Psoas muscle (tissue), 8 donors: ENCODE measurements at regions of chr17 and their contacts with region 1.

Region 1: GRCh38 chr17:32142038-32142856 is at the start of gene RHOT1:
- DNase-seq: peak; percentile 81 to 88
- ATAC-seq: peak; percentile 79 to 84 (median 80)
- H3K4me3 ChIP-seq: peak within 1 kb of the TSS; percentile 86
- H3K27ac ChIP-seq: peak within 1 kb of the TSS; percentile 90
- H3K4me1 ChIP-seq: peaks cover 20% of the 10 kb centered on the region
- H3K27me3 ChIP-seq: no peaks in the 10 kb centered on the region
- CTCF ChIP-seq: peak; percentile 64
- total RNA-seq, gene RHOT1: 22.9 to 41.0 (median 35.1) TPM

Region 2: DNA sequence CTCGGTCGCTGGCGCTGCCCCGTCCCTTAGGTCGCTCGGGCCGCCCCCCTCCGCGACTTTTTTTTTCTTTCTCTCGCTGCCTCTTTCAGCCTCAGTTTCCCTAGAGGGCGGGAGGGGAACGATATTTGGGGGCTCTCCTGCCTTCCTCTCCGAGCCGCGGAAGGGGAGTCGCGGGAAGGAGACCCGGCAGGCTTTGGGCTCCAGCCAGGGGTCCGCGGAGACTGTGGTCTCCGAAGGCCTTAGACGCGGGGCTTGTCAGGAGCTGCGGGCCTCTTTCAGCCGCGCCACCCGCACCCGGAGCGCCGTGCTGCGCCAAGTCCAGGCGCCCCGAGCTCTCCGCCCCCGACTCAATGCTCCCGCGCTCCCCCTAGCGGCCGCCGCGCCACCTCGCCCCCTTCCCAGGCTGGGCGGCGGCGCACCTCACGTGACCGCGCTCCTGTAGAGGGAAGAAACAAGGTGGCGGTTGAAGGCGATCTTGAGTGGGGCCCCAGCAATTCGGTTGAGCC is 135.2 kb before region 1 on chr17 and contains the start of gene LRRC37B:
- intact Hi-C with region 1: loop called (anchors 5 to 10 kb)
- DNase-seq: peak; percentile 87 to 93
- ATAC-seq: peak; percentile 98 to 100 (median 98)
- H3K4me3 ChIP-seq: peak within 1 kb of the TSS; percentile 83
- H3K27ac ChIP-seq: peak within 1 kb of the TSS; percentile 75
- H3K4me1 ChIP-seq: peaks cover 7% of the 10 kb centered on the region
- H3K27me3 ChIP-seq: no peaks in the 10 kb centered on the region
- CTCF ChIP-seq: peak; percentile 94
- total RNA-seq, gene LRRC37B: 2.0 to 6.5 (median 4.1) TPM

Region 3: GRCh38 chr17:32099686-32100085 is 42.6 kb before region 1 on chr17:
- intact Hi-C with region 1: no loop called
- DNase-seq: no peak
- ATAC-seq: no peak
- H3K4me3 ChIP-seq: no peak overlapping the region
- H3K27ac ChIP-seq: no peak overlapping the region
- H3K4me1 ChIP-seq: no peaks in the 10 kb centered on the region
- H3K27me3 ChIP-seq: peaks cover 0 to 8% (median 0%) of the 10 kb centered on the region in 3 donors
- CTCF ChIP-seq: no peak